ENCODE measurements at regions of chr15 and their contacts with region 1.

Region 1: DNA sequence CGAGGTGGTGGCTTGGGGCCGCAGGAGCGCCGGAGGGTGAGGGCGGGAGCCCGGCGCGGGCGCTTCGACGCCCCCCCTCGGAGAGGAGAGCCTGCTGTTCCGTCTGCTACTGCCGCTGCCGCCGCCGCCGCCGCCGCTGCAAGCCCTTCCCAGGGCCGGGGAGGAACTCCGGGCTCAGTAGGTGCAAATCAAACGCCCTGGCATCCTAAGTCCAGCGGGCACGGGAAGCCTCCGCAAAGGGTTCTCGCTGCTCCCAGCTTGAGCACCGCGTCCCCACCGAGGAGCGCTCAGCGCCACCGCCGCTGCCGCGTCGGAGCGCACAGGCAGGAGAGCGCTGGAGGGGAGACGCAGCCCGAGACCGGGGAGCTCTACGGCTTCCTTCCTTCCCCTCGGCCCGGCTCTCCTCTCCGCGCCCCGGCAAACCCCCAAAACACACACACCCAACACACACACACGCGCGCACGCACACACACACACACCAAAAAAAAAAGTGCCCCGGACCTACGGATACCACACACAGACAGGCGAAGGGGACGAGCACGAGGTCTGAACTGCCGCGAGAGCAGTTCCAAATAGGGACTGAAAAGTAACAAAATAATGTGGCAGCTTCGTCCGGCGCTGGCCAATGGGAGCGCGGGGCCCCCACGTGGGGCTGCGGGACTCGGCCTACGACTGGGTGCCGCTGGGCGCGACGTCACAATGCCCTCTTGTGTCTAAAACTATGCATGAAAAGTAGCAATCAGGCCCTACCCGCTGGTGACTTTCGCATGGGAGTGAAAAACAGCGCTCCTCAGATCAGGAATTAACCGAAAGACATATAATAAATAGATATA is at the start of gene TLE3:
- DNase-seq: peak; percentile 99
- CTCF ChIP-seq: peak; percentile 57

Region 2: DNA sequence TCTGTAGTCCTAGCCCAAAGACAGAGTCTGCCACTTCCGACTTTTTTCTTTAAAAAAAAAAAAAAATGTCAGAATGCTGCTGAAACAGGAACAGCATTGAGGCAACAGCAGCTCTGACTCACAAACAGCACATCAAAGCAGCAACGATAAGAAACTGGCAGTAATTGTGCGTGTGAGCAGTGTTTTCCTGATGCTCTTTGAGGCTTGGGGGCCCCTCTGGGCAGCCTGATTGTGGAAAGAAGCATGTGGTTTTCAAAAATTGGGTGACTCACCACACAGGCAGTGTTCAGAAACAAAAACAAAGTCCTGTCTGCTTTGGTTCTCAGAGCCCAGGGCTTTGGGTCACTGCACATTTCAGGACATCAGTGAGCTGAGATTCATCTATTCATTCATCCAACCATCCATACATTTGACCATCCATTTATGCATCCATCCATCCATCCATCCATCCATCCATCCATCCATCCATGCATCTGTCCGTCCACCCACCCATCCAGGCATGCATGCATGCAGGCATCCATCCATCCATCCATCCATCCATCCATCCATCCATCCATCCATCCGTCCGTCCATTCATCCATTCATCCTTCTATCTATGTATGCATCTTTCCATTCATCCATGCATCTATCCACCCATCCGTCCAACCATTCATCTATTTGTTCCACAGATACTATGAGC is 336.5 kb before region 1 on chr15:
- in situ Hi-C with region 1: loop called (anchors 25 kb)
- DNase-seq: peak; percentile 51
- CTCF ChIP-seq: no peak

Region 3: GRCh38 chr15:70023064-70023768 is 74.3 kb before region 1 on chr15:
- in situ Hi-C with region 1: no loop called
- DNase-seq: peak; percentile 78
- CTCF ChIP-seq: no peak

Region 4: DNA sequence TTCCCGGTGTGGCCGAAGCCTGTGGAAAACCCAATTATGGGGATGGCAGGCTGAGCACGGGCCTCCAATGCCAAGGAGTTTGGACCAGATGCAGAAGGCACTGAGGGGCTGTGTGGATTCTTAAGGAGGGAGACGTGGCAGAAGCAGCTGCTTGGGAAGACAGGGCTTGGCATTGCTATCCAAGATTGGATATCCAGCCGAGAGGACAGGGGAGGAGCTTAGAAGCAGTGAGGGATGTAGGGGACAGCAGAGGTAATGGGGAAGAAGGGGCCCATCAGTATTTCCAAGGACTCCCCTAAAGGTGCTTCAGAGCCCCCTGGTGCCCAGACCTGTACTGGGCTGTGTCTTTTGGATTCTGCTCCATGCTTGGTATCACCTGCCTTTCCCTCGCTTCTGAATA is 113.0 kb after region 1 on chr15:
- in situ Hi-C with region 1: no loop called
- DNase-seq: no peak
- CTCF ChIP-seq: peak; percentile 16

Measured in GM13976 (cell line).